Calu3 (cell line): ENCODE measurements at regions of chr19 and their contacts with region 1.

Region 1: DNA sequence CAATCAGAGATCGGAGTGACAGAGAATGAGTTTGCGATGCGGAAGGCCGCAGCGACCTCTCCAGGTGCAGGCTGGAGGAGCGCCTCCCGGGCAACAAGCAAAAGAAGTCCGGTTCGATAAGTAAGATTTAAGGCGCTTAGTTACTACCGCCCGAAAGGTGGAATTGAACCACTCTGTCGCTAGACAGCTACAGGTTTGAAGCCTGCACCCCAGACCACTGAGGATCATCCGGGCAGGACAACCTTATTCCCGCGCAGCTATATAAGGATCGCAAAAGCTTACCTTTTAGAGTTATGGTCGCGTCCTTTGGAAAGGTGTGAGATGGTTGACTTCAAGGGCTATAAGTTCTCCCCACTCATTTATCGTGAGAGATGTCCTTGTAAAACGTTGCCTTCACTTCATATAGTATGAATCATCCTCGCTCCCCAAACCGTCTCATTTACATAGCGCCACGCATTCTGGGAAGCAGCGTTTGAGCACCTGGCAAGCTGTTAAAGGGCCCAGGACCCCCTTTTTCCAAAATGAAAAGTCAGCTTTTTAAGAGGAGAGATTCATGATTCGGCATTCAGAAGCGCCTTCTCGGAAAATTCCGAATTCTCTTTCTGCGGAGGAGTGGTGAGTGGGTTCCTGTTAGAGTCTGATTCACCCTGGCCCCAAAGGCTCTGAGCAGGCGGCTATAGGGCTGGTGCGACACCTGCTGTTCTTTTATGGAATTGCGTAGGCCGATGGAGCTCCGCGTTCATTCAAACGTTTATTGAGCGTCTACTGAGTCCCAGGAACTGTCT is 10.8 kb downstream of the FOSB start:
- DNase-seq: peak; percentile 92
- H3K4me3 Mint-ChIP-seq: peak overlapping the region; percentile 52
- H3K27ac Mint-ChIP-seq: peak overlapping the region; percentile 98
- H3K4me1 Mint-ChIP-seq: peaks cover 31% of the 10 kb centered on the region
- H3K27me3 Mint-ChIP-seq: no peaks in the 10 kb centered on the region
- CTCF ChIP-seq: peak; percentile 99

Region 2: GRCh38 chr19:45423589-45424190 is 55.0 kb before region 1 on chr19 and contains the start of gene ERCC1:
- CTCF ChIA-PET with region 1: interaction called, 12 read pairs
- intact Hi-C with region 1: loop called (anchors 2 kb)
- DNase-seq: peak; percentile 99
- H3K4me3 Mint-ChIP-seq: peak within 1 kb of the TSS; percentile 77
- H3K27ac Mint-ChIP-seq: peak within 1 kb of the TSS; percentile 85
- H3K4me1 Mint-ChIP-seq: peaks cover 41% of the 10 kb centered on the region
- H3K27me3 Mint-ChIP-seq: no peaks in the 10 kb centered on the region
- CTCF ChIP-seq: no peak
- total RNA-seq, gene ERCC1: 55.7 and 58.9 TPM in 2 replicates

Region 3: DNA sequence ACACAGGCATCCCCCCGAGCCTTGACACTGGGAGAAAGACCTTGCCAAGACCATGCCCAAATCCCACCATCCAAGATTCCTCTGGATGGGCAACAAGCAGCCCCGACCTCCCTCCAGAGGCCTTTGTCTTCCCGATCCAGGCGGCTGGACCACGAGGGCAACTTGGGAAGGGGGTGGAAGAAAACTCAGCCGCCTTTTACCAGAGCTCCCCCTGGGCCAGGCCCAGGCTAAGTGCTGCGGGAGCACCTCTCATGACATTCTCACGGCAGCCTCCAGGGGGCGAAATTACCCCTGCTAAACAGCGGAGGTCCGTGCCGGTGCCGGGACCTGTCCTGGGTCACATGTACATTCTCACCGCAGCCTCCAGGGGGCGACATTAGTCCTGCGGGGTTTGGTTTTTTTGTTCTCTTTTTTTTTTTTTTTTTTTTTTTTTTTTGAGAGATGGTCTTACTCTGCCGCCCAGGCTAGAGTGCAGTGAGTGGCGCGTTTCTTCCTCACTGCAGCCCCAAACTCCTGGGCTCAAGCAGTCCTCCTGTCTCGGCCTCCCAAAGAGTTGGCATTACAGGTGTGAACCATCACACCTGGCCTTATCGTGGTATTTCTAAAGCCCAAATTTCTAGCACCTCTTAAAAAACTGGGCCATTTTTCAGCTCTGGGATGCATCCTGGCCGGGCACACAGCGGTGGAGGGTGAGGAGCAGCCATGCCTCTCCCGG is 338.5 kb after region 1 on chr19:
- CTCF ChIA-PET with region 1: no interaction called
- intact Hi-C with region 1: no loop called
- DNase-seq: peak; percentile 98
- H3K4me3 Mint-ChIP-seq: no peak overlapping the region
- H3K27ac Mint-ChIP-seq: no peak overlapping the region
- H3K4me1 Mint-ChIP-seq: no peaks in the 10 kb centered on the region
- H3K27me3 Mint-ChIP-seq: no peaks in the 10 kb centered on the region
- CTCF ChIP-seq: peak; percentile 97